Body of pancreas (tissue), 4 donors: ENCODE measurements at regions of chr19 and their contacts with region 1.

Region 1: GRCh38 chr19:48152551-48152950 is 17.6 kb downstream of the LIG1 start:
- DNase-seq: peak; percentile 49 to 74 (median 66)
- ATAC-seq: peak; percentile 69
- H3K4me3 ChIP-seq: no peak overlapping the region
- H3K27ac ChIP-seq: no peak overlapping the region
- H3K4me1 ChIP-seq: no peaks in the 10 kb centered on the region
- H3K27me3 ChIP-seq: no peaks in the 10 kb centered on the region
- CTCF ChIP-seq: peak; percentile 42 to 84 (median 77)
- POLR2A ChIP-seq: no peak

Region 2: GRCh38 chr19:47973529-47973928 is 179.0 kb before region 1 on chr19:
- intact Hi-C with region 1: loop called (anchors 5 kb)
- DNase-seq: no peak
- ATAC-seq: no peak
- H3K4me3 ChIP-seq: no peak overlapping the region
- H3K27ac ChIP-seq: no peak overlapping the region
- H3K4me1 ChIP-seq: no peaks in the 10 kb centered on the region
- H3K27me3 ChIP-seq: no peaks in the 10 kb centered on the region
- CTCF ChIP-seq: no peak
- POLR2A ChIP-seq: no peak

Region 3: DNA sequence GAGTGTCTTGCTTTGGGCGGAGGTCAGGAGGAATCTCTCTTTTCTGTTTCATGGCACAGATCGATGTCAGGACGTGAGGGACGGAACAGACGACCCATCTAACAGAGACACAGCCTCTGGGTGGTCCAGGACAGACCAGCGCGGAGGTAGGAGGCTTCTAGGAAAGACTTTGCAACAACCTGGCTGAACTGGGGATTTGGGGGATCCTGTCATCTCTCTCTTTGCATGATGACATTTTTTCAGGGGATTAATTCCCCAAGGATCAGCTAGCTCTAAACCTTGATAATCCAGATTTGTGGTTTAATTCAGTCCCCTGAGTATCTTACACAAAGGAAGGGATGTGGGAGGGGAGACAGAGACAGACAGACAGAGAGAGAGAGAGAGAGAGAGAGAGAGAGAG is 123.1 kb before region 1 on chr19:
- intact Hi-C with region 1: no loop called
- DNase-seq: no peak
- ATAC-seq: no peak
- H3K4me3 ChIP-seq: no peak overlapping the region
- H3K27ac ChIP-seq: no peak overlapping the region
- H3K4me1 ChIP-seq: no peaks in the 10 kb centered on the region
- H3K27me3 ChIP-seq: peaks cover 0 to 3% of the 10 kb centered on the region in 2 donors
- CTCF ChIP-seq: no peak
- POLR2A ChIP-seq: no peak